ENCODE measurements at regions of chr9 and their contacts with region 1.

Region 1: GRCh38 chr9:98774746-98775145 is 21.6 kb downstream of the ANKS6 start:
- DNase-seq: no peak
- ATAC-seq: peak; percentile 48
- H3K4me3 ChIP-seq: no peak overlapping the region
- H3K27ac ChIP-seq: no peak overlapping the region
- H3K4me1 ChIP-seq: peaks cover 7% of the 10 kb centered on the region
- H3K27me3 ChIP-seq: no peaks in the 10 kb centered on the region
- CTCF ChIP-seq: peak; percentile 40

Region 2: GRCh38 chr9:98314381-98315188 is 460.2 kb before region 1 on chr9:
- intact Hi-C with region 1: loop called (anchors 5 kb)
- DNase-seq: peak; percentile 82
- ATAC-seq: peak; percentile 84
- H3K4me3 ChIP-seq: no peak overlapping the region
- H3K27ac ChIP-seq: no peak overlapping the region
- H3K4me1 ChIP-seq: peaks cover 7% of the 10 kb centered on the region
- H3K27me3 ChIP-seq: no peaks in the 10 kb centered on the region
- CTCF ChIP-seq: no peak

Measured in upper lobe of right lung (tissue), 1 donor.